Sciatic nerve (tissue), 2 donors: ENCODE measurements at regions of chr12 and their contacts with region 1.

Region 1: DNA sequence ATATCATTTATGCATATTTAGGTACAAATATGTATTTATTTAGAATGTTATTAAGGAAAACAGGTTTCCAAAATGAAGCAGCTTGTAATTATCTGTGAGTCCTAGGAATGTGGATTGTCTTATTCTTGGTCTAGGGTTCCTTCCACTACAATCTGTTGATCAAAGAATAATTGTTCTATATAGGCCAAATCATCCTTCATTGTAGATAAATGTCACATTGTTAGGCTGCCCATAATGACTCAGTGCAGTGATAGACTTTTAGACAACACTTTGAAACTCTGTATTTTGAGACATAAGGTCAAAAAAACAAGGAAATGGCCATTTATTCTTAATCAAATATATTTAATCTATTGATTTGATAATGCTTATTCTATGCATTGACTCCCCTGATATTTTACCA is 283.0 kb downstream of the ACSS3 start:
- DNase-seq: no peak
- ATAC-seq: no peak

Region 2: GRCh38 chr12:82040987-82041743 is 680.2 kb after region 1 on chr12:
- intact Hi-C with region 1: no loop called
- DNase-seq: no peak
- ATAC-seq: no peak

Region 3: DNA sequence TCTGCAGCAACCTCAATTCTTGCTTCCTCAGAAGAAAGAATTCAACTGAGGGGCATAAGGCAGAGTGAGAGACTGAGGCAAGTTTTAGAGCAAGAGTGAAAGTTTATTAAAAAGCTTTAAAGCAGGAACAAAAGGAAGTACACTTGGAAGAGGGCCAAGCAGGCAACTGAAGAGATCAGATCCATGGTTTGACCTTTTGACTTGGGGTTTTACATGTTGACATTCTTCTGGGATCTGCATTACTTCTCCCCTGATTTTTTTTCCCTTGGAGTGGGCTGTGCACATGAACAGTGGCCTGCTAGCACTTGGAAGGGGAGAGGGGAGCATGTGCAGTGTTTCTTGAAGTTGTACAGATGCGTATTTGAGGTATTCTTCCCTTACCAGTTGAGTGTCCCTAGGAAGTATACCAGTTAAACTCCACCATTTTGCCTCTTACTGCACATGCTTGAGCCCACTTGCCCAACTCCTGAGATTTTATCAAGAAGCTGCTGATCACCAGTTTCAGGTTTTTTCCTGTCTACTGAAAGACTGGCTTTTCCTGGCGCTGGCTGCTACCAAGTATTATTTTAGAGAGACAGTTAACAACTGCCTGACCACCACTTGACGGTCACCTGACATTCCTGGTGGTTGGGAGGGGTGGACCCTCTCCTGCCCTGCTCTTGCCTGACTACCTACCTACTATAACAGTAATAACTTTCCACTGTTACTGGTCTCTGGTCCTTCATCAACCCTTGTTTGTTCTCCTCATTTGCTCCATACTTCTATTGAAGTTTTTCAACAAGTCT is 1299.8 kb after region 1 on chr12:
- intact Hi-C with region 1: loop called (anchors 10 kb)
- DNase-seq: no peak
- ATAC-seq: no peak